HCT116 (cell line): ENCODE measurements at regions of chr18 and their contacts with region 1.

Region 1: DNA sequence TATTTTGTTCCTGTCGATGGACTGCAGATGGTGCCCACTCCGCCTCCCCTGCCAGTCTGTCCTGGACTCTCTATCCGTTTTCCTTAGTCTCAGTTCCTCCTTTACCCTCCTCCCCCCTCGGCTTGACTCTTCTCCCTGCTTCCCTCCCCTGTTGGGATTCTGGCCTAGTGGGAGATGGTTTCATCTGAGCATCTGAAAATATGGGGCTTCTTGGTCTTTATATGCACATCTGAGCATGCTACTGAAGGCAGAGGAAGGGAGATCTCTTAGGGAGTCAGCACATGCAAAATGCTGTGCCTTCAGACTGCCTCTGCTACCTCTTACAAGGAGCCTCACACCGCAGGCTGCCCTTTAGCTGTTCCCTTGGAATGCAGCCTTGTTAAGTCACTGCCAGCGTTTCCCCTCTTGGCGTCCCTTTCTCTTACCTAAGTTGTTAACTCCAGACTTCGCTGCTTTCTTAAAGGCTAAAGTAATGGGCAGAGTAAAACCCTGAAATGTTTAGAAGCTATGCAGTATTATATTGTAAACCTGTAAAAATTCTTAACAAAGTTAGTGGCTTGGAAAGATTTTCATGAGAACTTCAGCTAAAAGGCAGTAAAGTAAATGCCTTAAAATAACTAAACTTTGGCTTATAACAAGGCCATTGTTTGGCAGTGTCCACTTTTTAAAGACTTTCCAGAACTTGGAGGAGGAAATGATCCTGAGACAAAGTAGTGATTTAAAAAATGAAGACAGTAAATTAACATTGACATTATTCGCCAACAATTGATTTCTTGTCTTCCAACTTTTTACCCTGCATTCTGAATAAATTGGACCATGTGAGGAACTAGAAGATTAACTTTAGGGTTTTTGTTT is 49.8 kb downstream of the LDLRAD4 start:
- DNase-seq: no peak
- ATAC-seq: no peak
- H3K4me3 ChIP-seq: no peak overlapping the region
- H3K27ac ChIP-seq: no peak overlapping the region
- H3K4me1 ChIP-seq: no peaks in the 10 kb centered on the region
- H3K27me3 ChIP-seq: no peaks in the 10 kb centered on the region
- CTCF ChIP-seq: no peak
- POLR2A ChIP-seq: no peak
- RAD21 ChIP-seq: no peak

Region 2: DNA sequence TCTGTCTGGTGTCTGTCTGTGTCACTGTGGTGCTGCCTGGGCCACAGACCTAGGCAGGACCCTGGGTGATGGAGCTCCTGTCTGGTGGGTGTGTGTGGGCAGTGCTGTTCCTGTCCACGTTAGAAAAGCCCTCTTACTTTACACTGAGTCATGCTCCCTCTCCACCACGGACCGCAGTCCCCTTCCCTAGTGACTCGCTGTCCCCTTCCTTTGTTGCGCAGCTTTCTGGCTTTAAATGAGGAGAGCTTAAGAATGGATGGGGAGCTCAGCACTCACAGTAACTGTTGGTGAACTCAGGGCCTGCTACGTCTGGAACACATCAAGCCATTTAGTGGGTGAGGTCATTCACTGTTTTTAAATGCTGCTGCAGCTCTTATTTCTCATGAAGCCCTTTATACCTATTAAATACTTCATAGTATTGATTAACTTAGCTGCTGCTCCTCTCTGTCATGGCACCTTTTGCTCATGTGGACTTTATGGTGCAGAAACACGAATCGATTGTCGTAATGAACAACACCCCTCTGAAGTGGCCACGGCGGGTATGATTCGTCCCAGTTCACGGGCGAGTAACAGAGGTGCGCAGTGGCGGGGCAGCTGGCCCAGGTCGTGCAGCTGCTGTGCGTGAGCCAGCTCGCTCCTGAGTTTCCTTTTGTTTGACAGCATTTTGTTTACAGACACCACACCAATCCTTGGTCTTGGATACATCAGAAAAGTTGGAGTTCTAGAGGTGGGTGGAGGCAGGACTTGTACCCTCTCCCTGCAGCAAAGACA is 50.5 kb after region 1 on chr18:
- CTCF ChIA-PET with region 1: no interaction called
- POLR2A ChIA-PET with region 1: no interaction called
- RAD21 ChIA-PET with region 1: no interaction called
- intact Hi-C with region 1: loop called (anchors 10 kb)
- DNase-seq: no peak
- ATAC-seq: no peak
- H3K4me3 ChIP-seq: no peak overlapping the region
- H3K27ac ChIP-seq: no peak overlapping the region
- H3K4me1 ChIP-seq: no peaks in the 10 kb centered on the region
- H3K27me3 ChIP-seq: no peaks in the 10 kb centered on the region
- CTCF ChIP-seq: no peak
- POLR2A ChIP-seq: no peak
- RAD21 ChIP-seq: no peak